H1 (cell line): ENCODE measurements at regions of chr11 and their contacts with region 1.

Region 1: DNA sequence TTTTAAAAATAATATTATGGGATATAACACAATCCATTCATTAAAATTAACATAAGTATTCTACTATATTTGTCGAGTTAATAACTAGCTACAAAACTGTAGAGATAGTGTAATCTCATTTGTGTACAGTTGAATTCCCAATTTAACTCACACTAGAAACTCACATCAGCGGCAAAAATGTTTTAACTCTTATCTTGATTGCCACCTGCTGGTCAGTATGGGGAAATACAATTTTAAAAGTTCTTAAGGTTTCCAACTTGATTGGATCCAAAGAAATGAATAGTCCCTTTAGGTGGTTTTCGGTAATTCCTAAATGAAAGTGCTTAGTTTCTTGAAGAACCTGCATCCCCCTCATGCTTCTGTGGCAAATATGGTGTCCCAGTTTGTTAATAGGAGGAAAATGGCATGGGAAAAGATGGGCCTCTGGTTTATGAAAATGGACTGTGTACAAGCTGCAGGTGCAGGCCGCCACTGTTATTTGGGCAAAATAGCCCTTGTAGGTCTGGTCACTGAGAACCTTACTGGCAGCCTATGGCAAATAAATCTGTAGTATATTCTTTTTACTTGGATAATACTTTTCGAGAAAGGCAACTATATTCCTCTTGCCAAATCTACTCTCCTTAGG is 33.7 kb upstream of the SLC17A6 start:
- DNase-seq: no peak
- H3K4me3 ChIP-seq: no peak overlapping the region
- H3K27ac ChIP-seq: no peak overlapping the region
- H3K4me1 ChIP-seq: no peaks in the 10 kb centered on the region
- H3K27me3 ChIP-seq: no peaks in the 10 kb centered on the region
- CTCF ChIP-seq: peak in 2 of 3 experiments; percentile 25 to 41; a peak in 2 of 4 replicates
- EP300 ChIP-seq: no peak
- POLR2A ChIP-seq: no peak
- RAD21 ChIP-seq: peak; percentile 60 to 61

Region 2: DNA sequence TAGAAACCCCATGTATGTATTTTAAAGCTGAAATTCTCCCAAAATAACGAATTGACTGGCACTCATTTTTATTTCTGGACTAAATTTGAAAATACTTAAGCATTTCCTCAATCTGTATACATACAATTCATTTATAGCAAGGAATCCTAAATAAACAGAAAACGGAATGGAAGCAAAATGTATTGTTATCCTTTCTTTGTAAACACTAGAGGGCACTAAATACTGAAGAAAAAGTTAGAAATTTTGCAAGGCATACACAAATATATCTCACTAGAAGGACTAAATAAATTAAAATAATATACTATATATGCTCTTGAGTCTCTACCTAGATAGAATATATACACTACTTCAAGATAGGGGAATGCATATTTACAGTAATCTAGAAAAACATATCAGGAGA is 134.6 kb before region 1 on chr11:
- CTCF ChIA-PET with region 1: interaction called, 23 read pairs
- POLR2A ChIA-PET with region 1: no interaction called
- DNase-seq: no peak
- H3K4me3 ChIP-seq: no peak overlapping the region
- H3K27ac ChIP-seq: no peak overlapping the region
- H3K4me1 ChIP-seq: no peaks in the 10 kb centered on the region
- H3K27me3 ChIP-seq: no peaks in the 10 kb centered on the region
- CTCF ChIP-seq: peak in 2 of 3 experiments; percentile 7 to 17; a peak in 2 of 4 replicates
- EP300 ChIP-seq: no peak
- POLR2A ChIP-seq: no peak
- RAD21 ChIP-seq: peak in 1 of 2 experiments; percentile 41; a peak in 3 of 4 replicates

Region 3: DNA sequence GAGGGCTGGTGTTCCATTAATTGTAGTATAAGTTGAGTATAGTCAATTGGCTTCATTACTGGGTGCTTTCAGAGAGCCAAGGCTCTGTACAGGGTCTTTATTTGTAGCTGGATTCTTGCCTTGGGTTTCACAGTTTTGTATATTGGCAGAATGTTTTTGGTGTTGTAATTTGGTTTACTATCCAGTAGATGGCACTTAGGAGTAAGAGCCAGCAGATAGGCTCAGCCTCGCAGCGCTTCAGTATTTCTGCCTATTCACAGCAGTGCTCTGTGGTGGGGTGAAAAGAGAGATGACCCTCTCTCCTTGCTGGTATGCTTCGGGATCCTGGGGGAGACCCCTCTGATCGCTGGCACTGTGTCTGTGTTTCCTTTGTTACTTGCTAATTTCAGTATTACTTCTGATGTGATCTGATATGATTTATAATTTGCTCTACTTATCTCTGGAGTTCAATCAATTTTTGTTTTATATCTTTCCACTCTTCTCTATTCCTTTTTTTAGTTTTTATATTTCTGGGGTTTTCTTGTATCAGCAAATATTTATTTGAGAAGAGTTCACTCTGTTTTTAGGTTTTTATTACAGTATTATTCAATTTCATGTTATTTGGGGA is 59.4 kb before region 1 on chr11:
- CTCF ChIA-PET with region 1: interaction called, 20 read pairs
- POLR2A ChIA-PET with region 1: no interaction called
- DNase-seq: peak in 1 of 2 experiments; percentile 25
- H3K4me3 ChIP-seq: no peak overlapping the region
- H3K27ac ChIP-seq: no peak overlapping the region
- H3K4me1 ChIP-seq: no peaks in the 10 kb centered on the region
- H3K27me3 ChIP-seq: no peaks in the 10 kb centered on the region
- CTCF ChIP-seq: peak in 2 of 3 experiments; percentile 65 to 80; a peak in 3 of 4 replicates
- EP300 ChIP-seq: no peak
- POLR2A ChIP-seq: no peak
- RAD21 ChIP-seq: peak; percentile 71 to 75

Region 4: GRCh38 chr11:22317656-22318055 is 13.2 kb after region 1 on chr11:
- CTCF ChIA-PET with region 1: interaction called, 17 read pairs
- POLR2A ChIA-PET with region 1: interaction called, 3 read pairs
- DNase-seq: no peak
- H3K4me3 ChIP-seq: no peak overlapping the region
- H3K27ac ChIP-seq: no peak overlapping the region
- H3K4me1 ChIP-seq: no peaks in the 10 kb centered on the region
- H3K27me3 ChIP-seq: no peaks in the 10 kb centered on the region
- CTCF ChIP-seq: no peak
- EP300 ChIP-seq: no peak
- POLR2A ChIP-seq: no peak
- RAD21 ChIP-seq: no peak

Region 5: GRCh38 chr11:22415476-22415875 is 111.0 kb after region 1 on chr11:
- CTCF ChIA-PET with region 1: no interaction called
- POLR2A ChIA-PET with region 1: no interaction called
- DNase-seq: no peak
- H3K4me3 ChIP-seq: no peak overlapping the region
- H3K27ac ChIP-seq: no peak overlapping the region
- H3K4me1 ChIP-seq: no peaks in the 10 kb centered on the region
- H3K27me3 ChIP-seq: no peaks in the 10 kb centered on the region
- CTCF ChIP-seq: no peak
- EP300 ChIP-seq: no peak
- POLR2A ChIP-seq: no peak
- RAD21 ChIP-seq: no peak